Breast epithelium (tissue), 4 donors: ENCODE measurements at regions of chr19 and their contacts with region 1.

Region 1: DNA sequence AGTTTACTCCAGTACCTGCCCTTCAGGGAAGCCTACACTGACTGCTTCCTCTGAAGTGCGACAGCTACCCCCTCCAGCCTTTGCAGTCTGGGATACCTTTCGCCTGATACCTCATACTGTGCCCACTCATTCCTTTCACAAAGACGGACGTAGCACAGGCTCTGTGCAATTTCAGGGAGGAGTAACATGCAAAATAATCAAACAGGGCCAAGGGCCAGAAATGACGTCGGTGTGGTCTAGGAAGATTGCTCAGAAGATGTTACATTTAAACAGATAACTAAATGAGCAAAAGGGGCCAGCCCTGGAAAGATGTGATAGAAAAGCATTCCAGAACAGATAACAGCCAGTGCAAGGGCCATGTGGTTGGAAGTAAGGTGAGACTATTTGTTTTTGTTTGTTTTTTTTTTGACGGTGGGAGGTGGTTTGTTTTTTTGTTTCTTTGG is 6.6 kb upstream of the DDX39A start:
- DNase-seq: no peak
- H3K4me3 ChIP-seq: no peak overlapping the region
- H3K27ac ChIP-seq: no peak overlapping the region
- H3K4me1 ChIP-seq: no peaks in the 10 kb centered on the region
- H3K27me3 ChIP-seq: no peaks in the 10 kb centered on the region
- CTCF ChIP-seq: no peak
- POLR2A ChIP-seq: no peak

Region 2: GRCh38 chr19:14407605-14408484 is 17.9 kb before region 1 on chr19:
- intact Hi-C with region 1: loop called (anchors 2 kb)
- DNase-seq: no peak
- H3K4me3 ChIP-seq: no peak overlapping the region
- H3K27ac ChIP-seq: no peak overlapping the region
- H3K4me1 ChIP-seq: no peaks in the 10 kb centered on the region
- H3K27me3 ChIP-seq: no peaks in the 10 kb centered on the region
- CTCF ChIP-seq: no peak
- POLR2A ChIP-seq: no peak

Region 3: GRCh38 chr19:14536926-14537692 is 111.4 kb after region 1 on chr19:
- intact Hi-C with region 1: no loop called
- DNase-seq: peak; percentile 66 to 78
- H3K4me3 ChIP-seq: peak overlapping the region in 2 of 3 donors; percentile 27 to 33
- H3K27ac ChIP-seq: peak overlapping the region; percentile 55 to 68
- H3K4me1 ChIP-seq: no peaks in the 10 kb centered on the region
- H3K27me3 ChIP-seq: no peaks in the 10 kb centered on the region
- CTCF ChIP-seq: no peak
- POLR2A ChIP-seq: no peak

Region 4: DNA sequence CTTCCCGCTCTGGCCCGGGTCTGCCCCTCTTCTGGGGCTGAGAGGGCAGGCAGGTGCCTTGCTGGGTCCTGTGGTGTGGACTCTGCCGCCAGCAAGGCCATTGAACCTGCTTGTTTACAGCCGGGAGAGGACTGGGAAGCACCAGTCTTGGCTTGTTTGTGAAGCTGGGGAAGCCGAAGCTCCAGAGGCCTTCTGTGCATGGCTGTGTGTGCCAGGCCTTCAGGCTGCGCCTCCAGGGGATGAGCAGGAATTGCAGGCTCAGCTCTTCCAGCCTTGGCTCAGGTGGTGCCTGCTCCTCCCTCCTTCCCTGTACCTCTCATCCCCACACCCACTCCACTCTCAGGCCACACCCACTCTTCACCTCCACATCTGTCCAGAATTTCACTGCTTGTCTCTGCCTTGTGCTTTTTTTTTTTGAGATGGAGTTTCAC is 128.7 kb after region 1 on chr19:
- intact Hi-C with region 1: no loop called
- DNase-seq: peak; percentile 51 to 75
- H3K4me3 ChIP-seq: peak overlapping the region in 1 of 3 donors; percentile 5
- H3K27ac ChIP-seq: peak overlapping the region; percentile 77 to 86
- H3K4me1 ChIP-seq: peaks cover 11 to 28% of the 10 kb centered on the region in 2 donors
- H3K27me3 ChIP-seq: no peaks in the 10 kb centered on the region
- CTCF ChIP-seq: no peak
- POLR2A ChIP-seq: no peak